ENCODE measurements at regions of chr17 and their contacts with region 1.

Region 1: GRCh38 chr17:78484300-78485246 is 92.6 kb downstream of the DNAH17 start:
- DNase-seq: no peak
- H3K4me3 ChIP-seq: peak overlapping the region; percentile 21
- CTCF ChIP-seq: no peak

Region 2: GRCh38 chr17:78140169-78140976 is 344.2 kb before region 1 on chr17:
- in situ Hi-C with region 1: no loop called
- DNase-seq: peak; percentile 73
- H3K4me3 ChIP-seq: no peak overlapping the region
- CTCF ChIP-seq: no peak

Region 3: DNA sequence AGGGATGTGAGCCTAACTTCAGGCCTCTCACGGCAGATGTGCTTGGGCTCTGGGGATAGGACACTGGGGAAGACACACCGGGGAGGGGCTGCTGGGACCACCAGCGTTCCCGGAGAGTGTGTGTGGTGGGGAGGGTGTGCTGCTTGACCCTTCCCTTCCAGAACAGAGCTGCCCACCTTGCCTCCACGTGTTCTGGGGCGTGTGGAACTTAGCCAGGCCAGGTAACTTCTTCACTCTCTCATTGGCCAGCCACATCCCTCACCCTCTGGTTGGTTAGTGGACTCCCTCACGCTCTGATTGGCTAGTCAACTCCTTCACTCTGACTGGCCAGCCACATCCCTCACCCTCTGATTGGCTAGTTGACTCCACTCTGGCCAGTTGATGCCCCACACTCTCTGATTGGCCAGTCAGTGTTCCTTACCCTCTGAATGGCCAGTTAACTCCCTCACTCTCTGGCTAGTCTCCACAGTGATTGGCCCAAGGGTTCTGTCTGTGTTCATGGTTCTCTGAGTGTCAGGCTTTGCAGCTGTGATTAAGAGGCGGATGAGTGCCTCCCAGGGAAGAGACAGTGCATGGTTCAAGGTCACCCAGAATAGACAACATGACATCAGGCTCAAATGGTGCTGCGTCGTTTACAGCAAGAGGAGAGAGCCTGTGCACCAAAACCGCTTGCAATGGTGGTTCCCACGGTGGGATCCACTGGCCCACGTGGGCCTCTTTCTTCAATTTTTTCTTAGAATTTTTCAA is 243.1 kb before region 1 on chr17:
- in situ Hi-C with region 1: no loop called
- DNase-seq: peak; percentile 31
- H3K4me3 ChIP-seq: no peak overlapping the region
- CTCF ChIP-seq: no peak

Region 4: GRCh38 chr17:78828470-78829185 is 344.1 kb after region 1 on chr17:
- in situ Hi-C with region 1: loop called (anchors 10 kb)
- DNase-seq: peak; percentile 60
- H3K4me3 ChIP-seq: no peak overlapping the region
- CTCF ChIP-seq: peak; percentile 73

Measured in astrocyte of the spinal cord (primary cell).